ENCODE measurements at regions of chr14 and their contacts with region 1.

Region 1: GRCh38 chr14:70907176-70907995 is at the start of gene PCNX1:
- DNase-seq: peak; percentile 93
- ATAC-seq: peak; percentile 82
- H3K4me3 Mint-ChIP-seq: peak within 1 kb of the TSS; percentile 92
- H3K27ac Mint-ChIP-seq: peak within 1 kb of the TSS; percentile 82
- H3K4me1 Mint-ChIP-seq: peaks cover 54% of the 10 kb centered on the region
- H3K27me3 Mint-ChIP-seq: no peaks in the 10 kb centered on the region
- total RNA-seq, gene PCNX1: 64.4 to 69.2 TPM

Region 2: DNA sequence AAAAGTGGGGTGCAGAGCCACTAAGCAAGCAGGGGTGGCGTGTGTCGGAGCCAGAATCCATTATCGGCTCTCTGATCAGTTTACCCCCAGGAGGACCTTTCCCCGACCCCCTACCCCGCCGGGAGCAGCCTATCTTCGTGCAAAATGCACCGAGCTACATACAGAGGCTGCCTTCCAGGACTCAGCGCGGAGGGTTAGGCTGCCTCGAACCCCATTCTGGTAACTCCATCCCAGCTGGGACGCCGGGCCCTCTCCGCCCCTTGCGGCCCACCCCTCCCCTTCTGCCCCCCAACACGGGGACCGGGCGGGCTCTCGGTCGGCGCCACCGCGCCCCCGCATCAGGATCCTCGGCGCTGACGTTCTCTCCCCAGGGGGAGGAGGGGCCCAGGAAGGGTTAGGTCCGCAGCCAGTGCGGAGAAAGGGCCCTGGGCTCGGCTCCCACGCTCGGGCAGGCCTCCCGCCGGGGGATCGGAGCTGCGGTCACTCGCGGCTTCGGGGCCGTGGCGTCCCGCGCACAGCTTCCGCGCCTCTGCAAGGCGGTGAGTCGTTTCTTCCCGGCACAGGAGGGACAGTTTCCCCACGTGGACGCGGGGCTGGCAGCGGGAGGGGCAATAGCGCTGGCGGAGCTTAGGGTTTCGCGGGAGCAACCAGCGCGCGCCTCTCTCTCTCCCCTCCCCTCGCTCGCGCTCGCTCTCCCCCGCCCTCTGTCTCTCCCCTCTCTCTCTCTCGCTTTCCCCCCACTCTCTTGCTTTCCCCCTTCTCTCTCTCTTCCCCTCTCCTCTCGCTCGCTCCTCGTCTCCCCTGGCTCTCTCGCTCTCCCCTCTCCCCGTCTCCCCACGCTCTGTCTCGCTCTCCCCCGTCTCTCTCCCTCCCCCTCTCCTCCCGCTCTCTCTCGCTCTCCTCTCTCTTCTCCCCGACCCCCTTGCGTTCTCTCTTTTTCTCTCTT is 85.5 kb before region 1 on chr14:
- CTCF ChIA-PET with region 1: interaction called, 43 read pairs
- DNase-seq: peak; percentile 62
- ATAC-seq: peak; percentile 65
- H3K4me3 Mint-ChIP-seq: peak overlapping the region; percentile 71
- H3K27ac Mint-ChIP-seq: peak overlapping the region; percentile 24
- H3K4me1 Mint-ChIP-seq: peaks cover 28% of the 10 kb centered on the region
- H3K27me3 Mint-ChIP-seq: peaks cover 25% of the 10 kb centered on the region

Region 3: GRCh38 chr14:70887207-70887681 is 20.1 kb before region 1 on chr14:
- CTCF ChIA-PET with region 1: interaction called, 179 read pairs
- DNase-seq: no peak
- ATAC-seq: peak; percentile 21
- H3K4me3 Mint-ChIP-seq: peak overlapping the region; percentile 65
- H3K27ac Mint-ChIP-seq: peak overlapping the region; percentile 96
- H3K4me1 Mint-ChIP-seq: peaks cover 87% of the 10 kb centered on the region
- H3K27me3 Mint-ChIP-seq: no peaks in the 10 kb centered on the region

Region 4: GRCh38 chr14:70934502-70935134 is 27.2 kb after region 1 on chr14:
- CTCF ChIA-PET with region 1: interaction called, 16 read pairs
- DNase-seq: no peak
- ATAC-seq: peak; percentile 82
- H3K4me3 Mint-ChIP-seq: peak overlapping the region; percentile 55
- H3K27ac Mint-ChIP-seq: peak overlapping the region; percentile 93
- H3K4me1 Mint-ChIP-seq: peaks cover 54% of the 10 kb centered on the region
- H3K27me3 Mint-ChIP-seq: no peaks in the 10 kb centered on the region

Region 5: DNA sequence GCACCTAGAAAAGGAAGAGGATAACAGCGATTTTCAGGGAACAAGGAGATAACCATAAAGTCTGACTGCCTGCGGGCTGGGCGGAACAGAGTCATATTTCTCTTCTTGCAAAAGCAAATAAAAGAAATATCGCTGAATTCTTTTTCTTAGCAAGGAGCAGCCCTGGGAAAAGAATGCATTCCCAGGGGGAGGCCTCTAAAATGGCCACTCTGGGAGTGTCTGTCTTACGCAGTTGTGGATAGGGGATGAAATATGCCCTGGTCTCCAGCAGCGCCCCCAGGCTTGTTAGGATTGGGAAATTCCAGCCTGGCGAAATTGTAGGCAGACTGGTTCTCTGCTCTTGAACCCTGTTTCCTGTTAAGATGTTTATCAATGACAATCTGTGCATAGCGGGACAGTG is 40.3 kb after region 1 on chr14:
- CTCF ChIA-PET with region 1: interaction called, 91 read pairs
- DNase-seq: no peak
- ATAC-seq: no peak
- H3K4me3 Mint-ChIP-seq: no peak overlapping the region
- H3K27ac Mint-ChIP-seq: no peak overlapping the region
- H3K4me1 Mint-ChIP-seq: peaks cover 12% of the 10 kb centered on the region
- H3K27me3 Mint-ChIP-seq: no peaks in the 10 kb centered on the region

Region 6: DNA sequence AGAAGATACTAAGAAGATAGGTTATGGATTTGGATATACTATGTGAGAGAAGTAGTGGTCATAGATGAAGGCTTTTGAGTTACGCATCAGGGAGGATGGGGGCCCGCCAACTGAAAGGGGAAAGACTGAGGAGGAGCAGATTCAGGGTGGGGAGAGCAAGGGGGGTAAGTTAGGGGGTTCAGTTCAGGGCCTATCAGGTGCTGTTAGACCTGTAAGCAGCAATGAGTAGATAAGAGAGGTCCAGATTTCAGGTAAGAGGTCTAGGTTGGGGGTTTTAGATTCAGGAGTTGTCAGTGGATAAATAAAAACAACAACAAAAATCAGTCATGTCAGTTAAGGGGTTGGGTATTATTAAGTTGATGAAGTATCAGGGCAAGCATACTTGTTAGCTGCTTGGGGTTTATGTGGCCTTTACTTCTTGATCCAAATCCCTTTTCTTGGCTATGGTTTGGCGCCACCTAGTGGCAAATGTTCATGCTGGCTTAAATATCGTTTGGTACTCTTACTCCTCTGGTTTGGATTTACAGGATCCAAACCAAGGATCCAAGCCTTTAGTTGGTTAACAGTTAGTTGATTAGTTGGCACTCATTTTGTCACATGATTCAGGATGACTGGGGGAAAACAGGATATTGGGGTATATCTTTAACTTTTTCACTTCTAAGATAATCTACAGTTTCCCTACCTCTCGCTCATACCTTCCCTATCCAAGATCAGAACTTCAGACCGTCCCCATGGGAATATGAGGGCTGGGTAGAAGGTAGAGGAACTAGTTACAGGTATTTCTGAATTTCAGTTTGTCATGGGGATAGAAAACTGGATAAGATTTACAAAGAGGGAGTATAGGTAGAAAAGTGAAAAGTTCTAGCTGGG is 65.0 kb after region 1 on chr14:
- CTCF ChIA-PET with region 1: interaction called, 15 read pairs
- DNase-seq: peak; percentile 90
- ATAC-seq: peak; percentile 84
- H3K4me3 Mint-ChIP-seq: no peak overlapping the region
- H3K27ac Mint-ChIP-seq: peak overlapping the region; percentile 32
- H3K4me1 Mint-ChIP-seq: peaks cover 13% of the 10 kb centered on the region
- H3K27me3 Mint-ChIP-seq: no peaks in the 10 kb centered on the region